GM12878 (cell line): ENCODE measurements at regions of chr6 and their contacts with region 1.

Region 1: GRCh38 chr6:123655521-123656306 is 19.0 kb upstream of the TRDN start:
- DNase-seq: no peak
- ATAC-seq: peak; percentile 91
- H3K4me3 ChIP-seq: 0 out of 2 replicates have a peak overlapping the region, but pooled peaks have one; percentile 0
- H3K27ac ChIP-seq: no peak overlapping the region
- H3K4me1 ChIP-seq: no peaks in the 10 kb centered on the region
- H3K27me3 ChIP-seq: no peaks in the 10 kb centered on the region
- CTCF ChIP-seq: no peak
- EP300 ChIP-seq: no peak
- POLR2A ChIP-seq: no peak
- RAD21 ChIP-seq: no peak

Region 2: GRCh38 chr6:123636782-123637181 is 18.9 kb before region 1 on chr6 and contains the start of gene TRDN:
- CTCF ChIA-PET with region 1: interaction called, 5 read pairs
- POLR2A ChIA-PET with region 1: interaction called, 3 read pairs
- RAD21 ChIA-PET with region 1: interaction called, 16 read pairs
- SMC1A ChIA-PET with region 1: interaction called, 9 read pairs
- in situ Hi-C with region 1: no loop called
- intact Hi-C with region 1: no loop called
- DNase-seq: no peak
- ATAC-seq: no peak
- H3K4me3 ChIP-seq: no peak within 1 kb of the TSS
- H3K27ac ChIP-seq: no peak within 1 kb of the TSS
- H3K4me1 ChIP-seq: no peaks in the 10 kb centered on the region
- H3K27me3 ChIP-seq: no peaks in the 10 kb centered on the region
- CTCF ChIP-seq: no peak
- EP300 ChIP-seq: no peak
- POLR2A ChIP-seq: no peak
- RAD21 ChIP-seq: no peak
- polyA plus RNA-seq, gene TRDN: not detected